Panc1 (cell line): ENCODE measurements at regions of chr3 and their contacts with region 1.

Region 1: GRCh38 chr3:131899021-131899420 is 135.8 kb downstream of the CPNE4 start:
- DNase-seq: no peak
- ATAC-seq: no peak
- H3K4me3 ChIP-seq: no peak overlapping the region
- H3K27ac ChIP-seq: no peak overlapping the region
- H3K4me1 ChIP-seq: no peaks in the 10 kb centered on the region
- H3K27me3 ChIP-seq: 0 out of 2 replicates have a peak, but pooled peaks cover 2% of the 10 kb centered on the region
- CTCF ChIP-seq: no peak

Region 2: GRCh38 chr3:131381444-131382291 is 517.4 kb before region 1 on chr3 and contains the start of gene NUDT16:
- CTCF ChIA-PET with region 1: no interaction called
- POLR2A ChIA-PET with region 1: interaction called, 12 read pairs
- in situ Hi-C with region 1: no loop called
- intact Hi-C with region 1: no loop called
- DNase-seq: peak; percentile 92
- ATAC-seq: peak; percentile 100
- H3K4me3 ChIP-seq: peak within 1 kb of the TSS; percentile 90 to 92
- H3K27ac ChIP-seq: peak within 1 kb of the TSS; percentile 85
- H3K4me1 ChIP-seq: peaks cover 6% of the 10 kb centered on the region
- H3K27me3 ChIP-seq: no peaks in the 10 kb centered on the region
- CTCF ChIP-seq: no peak
- total RNA-seq, gene NUDT16: 12.5 TPM

Region 3: DNA sequence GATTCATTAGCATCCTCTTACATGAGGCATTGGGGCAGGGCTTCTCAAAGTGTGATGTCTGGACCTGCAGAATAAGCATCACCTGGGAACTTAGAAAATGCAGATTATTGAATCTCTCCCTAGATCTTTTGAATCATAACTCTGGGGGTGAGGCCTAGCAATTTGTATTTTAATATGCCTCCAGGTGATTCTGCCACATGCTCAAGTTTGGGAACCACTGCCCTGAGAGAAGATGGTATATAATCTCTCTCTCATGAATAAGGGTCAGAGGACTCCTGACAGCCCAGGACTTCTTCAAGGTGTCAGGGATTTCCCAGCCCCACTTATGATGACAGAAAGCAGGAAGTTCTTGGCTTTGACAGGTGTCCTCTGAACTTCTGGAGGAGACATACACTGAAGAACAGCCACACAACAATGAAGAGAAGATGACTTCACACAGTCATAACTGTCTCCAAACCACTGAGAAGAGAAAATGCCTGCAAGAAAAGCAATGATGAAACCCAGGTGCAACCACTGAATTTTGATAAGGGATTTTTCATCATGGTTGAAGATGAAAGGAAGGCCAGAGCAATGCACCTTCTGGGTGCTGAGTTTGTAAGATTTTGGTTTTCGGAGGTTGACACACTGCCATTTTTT is 184.3 kb before region 1 on chr3:
- CTCF ChIA-PET with region 1: no interaction called
- POLR2A ChIA-PET with region 1: no interaction called
- in situ Hi-C with region 1: no loop called
- intact Hi-C with region 1: no loop called
- DNase-seq: no peak
- ATAC-seq: no peak
- H3K4me3 ChIP-seq: no peak overlapping the region
- H3K27ac ChIP-seq: no peak overlapping the region
- H3K4me1 ChIP-seq: no peaks in the 10 kb centered on the region
- H3K27me3 ChIP-seq: 0 out of 2 replicates have a peak, but pooled peaks cover 2% of the 10 kb centered on the region
- CTCF ChIP-seq: no peak

Region 4: DNA sequence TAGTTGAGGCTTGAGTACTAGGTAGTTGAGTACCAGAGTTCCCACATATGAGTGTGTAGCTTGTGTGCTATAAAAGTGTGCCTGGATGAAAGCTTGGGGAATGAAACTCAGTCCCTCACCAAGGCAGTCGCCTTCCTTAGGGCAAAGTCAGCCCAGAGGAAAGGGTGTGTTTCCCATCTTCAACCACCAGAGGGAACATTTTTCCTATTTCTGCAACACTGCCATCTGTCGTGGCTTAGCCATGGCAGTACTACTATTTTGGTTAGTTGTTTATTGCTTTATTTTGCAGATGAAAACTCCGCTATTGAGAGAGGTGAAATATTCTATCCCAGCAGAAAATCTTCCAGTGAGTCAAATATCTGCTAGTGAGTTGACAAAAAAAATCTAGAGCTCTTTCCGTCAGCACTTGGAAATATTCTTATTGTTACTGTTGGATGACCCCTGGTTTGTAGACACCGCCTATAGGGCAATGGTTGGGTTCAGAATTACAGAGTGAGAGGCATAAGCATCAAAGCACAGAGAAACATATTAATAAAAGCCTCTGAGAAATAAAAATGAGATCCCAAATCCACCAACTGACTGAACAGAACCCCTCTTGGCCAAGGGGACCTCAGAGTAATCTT is 104.1 kb before region 1 on chr3:
- CTCF ChIA-PET with region 1: no interaction called
- POLR2A ChIA-PET with region 1: no interaction called
- in situ Hi-C with region 1: no loop called
- intact Hi-C with region 1: no loop called
- DNase-seq: peak; percentile 39
- ATAC-seq: peak; percentile 97
- H3K4me3 ChIP-seq: no peak overlapping the region
- H3K27ac ChIP-seq: no peak overlapping the region
- H3K4me1 ChIP-seq: no peaks in the 10 kb centered on the region
- H3K27me3 ChIP-seq: 0 out of 2 replicates have a peak, but pooled peaks cover 3% of the 10 kb centered on the region
- CTCF ChIP-seq: peak; percentile 86